ENCODE measurements at regions of chr5 and their contacts with region 1.

Region 1: DNA sequence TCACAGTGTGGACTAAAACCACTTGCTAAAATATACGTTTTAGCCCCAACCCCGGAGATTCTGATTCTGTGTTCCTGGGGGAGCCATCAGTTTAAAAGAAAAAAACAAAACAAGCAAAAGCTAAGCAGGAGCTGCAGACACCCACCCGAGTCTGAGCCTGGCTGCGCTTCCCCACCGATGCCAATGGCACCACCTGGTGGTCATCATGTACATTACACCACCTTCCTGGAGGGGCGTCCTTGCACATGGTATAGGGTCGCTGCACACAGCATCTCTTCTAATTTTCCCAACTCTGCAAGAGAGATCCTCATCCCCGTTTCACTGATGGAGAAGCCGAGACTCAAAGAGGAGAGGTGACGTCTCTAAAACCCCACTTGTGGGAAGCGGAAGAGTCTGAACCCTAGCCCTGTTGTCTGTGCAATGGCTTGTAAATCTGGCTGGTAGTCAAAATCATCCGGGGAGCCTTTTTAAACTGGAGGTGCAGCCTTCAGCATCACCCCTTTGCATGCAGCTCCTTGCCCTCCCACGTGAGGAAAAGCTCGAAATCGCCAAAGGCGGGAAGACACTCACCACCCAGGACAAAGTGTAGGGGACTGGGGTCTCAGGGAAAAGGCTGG is 23.1 kb upstream of the CNOT6 start:
- DNase-seq: peak; percentile 46
- ATAC-seq: peak; percentile 76
- H3K4me3 ChIP-seq: no peak overlapping the region
- H3K27ac ChIP-seq: no peak overlapping the region
- H3K4me1 ChIP-seq: no peaks in the 10 kb centered on the region
- H3K27me3 ChIP-seq: no peaks in the 10 kb centered on the region
- CTCF ChIP-seq: peak; percentile 95

Region 2: GRCh38 chr5:180333661-180334060 is 137.4 kb before region 1 on chr5:
- CTCF ChIA-PET with region 1: interaction called, 10 read pairs
- POLR2A ChIA-PET with region 1: no interaction called
- in situ Hi-C with region 1: no loop called
- intact Hi-C with region 1: no loop called
- DNase-seq: no peak
- ATAC-seq: peak; percentile 48
- H3K4me3 ChIP-seq: no peak overlapping the region
- H3K27ac ChIP-seq: no peak overlapping the region
- H3K4me1 ChIP-seq: peaks cover 3% of the 10 kb centered on the region
- H3K27me3 ChIP-seq: no peaks in the 10 kb centered on the region
- CTCF ChIP-seq: no peak

Measured in Panc1 (cell line).